ENCODE measurements at regions of chr17 and their contacts with region 1.

Region 1: GRCh38 chr17:77957857-77958715 is at the start of gene TNRC6C:
- DNase-seq: peak; percentile 99 to 100 (median 100)
- ATAC-seq: peak; percentile 86
- H3K4me3 ChIP-seq: peak within 1 kb of the TSS; percentile 74 to 81
- H3K4me3 Mint-ChIP-seq: peak within 1 kb of the TSS; percentile 97
- H3K27ac ChIP-seq: peak within 1 kb of the TSS; percentile 57 to 79
- H3K27ac Mint-ChIP-seq: peak within 1 kb of the TSS; percentile 97
- H3K4me1 ChIP-seq: peaks cover 37% of the 10 kb centered on the region
- H3K4me1 Mint-ChIP-seq: peaks cover 38% of the 10 kb centered on the region
- H3K27me3 ChIP-seq: no peaks in the 10 kb centered on the region
- H3K27me3 Mint-ChIP-seq: no peaks in the 10 kb centered on the region
- CTCF ChIP-seq: no peak
- total RNA-seq, gene TNRC6C: 49.3 to 53.8 TPM

Region 2: GRCh38 chr17:77312786-77313599 is 645.1 kb before region 1 on chr17:
- CTCF ChIA-PET with region 1: no interaction called
- POLR2A ChIA-PET with region 1: no interaction called
- intact Hi-C with region 1: no loop called
- DNase-seq: no peak
- ATAC-seq: no peak
- H3K4me3 ChIP-seq: no peak overlapping the region
- H3K4me3 Mint-ChIP-seq: no peak overlapping the region
- H3K27ac ChIP-seq: no peak overlapping the region
- H3K27ac Mint-ChIP-seq: no peak overlapping the region
- H3K4me1 ChIP-seq: no peaks in the 10 kb centered on the region
- H3K4me1 Mint-ChIP-seq: no peaks in the 10 kb centered on the region
- H3K27me3 ChIP-seq: no peaks in the 10 kb centered on the region
- H3K27me3 Mint-ChIP-seq: no peaks in the 10 kb centered on the region
- CTCF ChIP-seq: no peak

Region 3: DNA sequence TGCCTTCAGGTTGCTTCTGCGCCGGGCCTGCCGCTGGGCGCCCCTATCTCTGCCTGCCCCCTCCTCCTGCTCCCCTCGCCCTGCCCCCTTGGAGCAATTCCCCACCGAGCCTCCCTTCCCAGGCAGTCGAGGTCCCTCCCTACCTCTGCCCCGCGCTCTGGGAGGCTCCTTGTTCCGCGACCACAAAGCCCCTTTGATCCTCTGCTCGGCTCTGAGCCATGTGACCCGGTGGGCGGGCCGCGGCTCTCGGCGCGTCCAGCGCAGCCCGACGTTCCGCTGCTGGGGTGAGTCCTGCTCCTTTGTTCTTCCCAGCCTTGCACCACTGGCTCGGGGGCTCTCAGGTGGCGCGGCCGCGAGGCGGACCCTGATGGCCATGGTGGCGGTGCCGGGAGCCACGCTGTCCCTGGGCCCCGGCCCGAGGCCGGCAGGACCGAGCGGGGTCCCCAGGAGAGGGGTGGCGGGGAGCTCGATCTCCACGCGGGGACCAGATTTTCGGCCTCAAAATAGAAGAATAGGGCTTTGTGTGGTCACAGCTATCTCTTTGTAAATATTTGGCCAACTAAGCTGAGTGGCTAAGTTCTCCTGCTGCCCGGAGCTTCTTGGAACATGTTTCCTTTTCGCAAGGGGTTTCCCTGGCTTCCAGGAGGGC is 506.7 kb before region 1 on chr17:
- CTCF ChIA-PET with region 1: no interaction called
- POLR2A ChIA-PET with region 1: interaction called, 3 read pairs
- intact Hi-C with region 1: loop called in 1 of 2 experiments (anchors 5 kb)
- DNase-seq: peak; percentile 36 to 86 (median 73)
- ATAC-seq: peak; percentile 25
- H3K4me3 ChIP-seq: peak overlapping the region; percentile 93 to 99
- H3K4me3 Mint-ChIP-seq: peak overlapping the region; percentile 94
- H3K27ac ChIP-seq: peak overlapping the region; percentile 80 to 86
- H3K27ac Mint-ChIP-seq: peak overlapping the region; percentile 100
- H3K4me1 ChIP-seq: peaks cover 54% of the 10 kb centered on the region
- H3K4me1 Mint-ChIP-seq: peaks cover 50% of the 10 kb centered on the region
- H3K27me3 ChIP-seq: no peaks in the 10 kb centered on the region
- H3K27me3 Mint-ChIP-seq: no peaks in the 10 kb centered on the region
- CTCF ChIP-seq: no peak

Region 4: GRCh38 chr17:77772461-77772897 is 185.6 kb before region 1 on chr17:
- CTCF ChIA-PET with region 1: interaction called, 4 read pairs
- POLR2A ChIA-PET with region 1: interaction called, 15 read pairs
- intact Hi-C with region 1: loop called (anchors 2 kb)
- DNase-seq: peak; percentile 46 to 82 (median 67)
- ATAC-seq: peak; percentile 95
- H3K4me3 ChIP-seq: no peak overlapping the region
- H3K4me3 Mint-ChIP-seq: no peak overlapping the region
- H3K27ac ChIP-seq: no peak overlapping the region
- H3K27ac Mint-ChIP-seq: peak overlapping the region; percentile 73
- H3K4me1 ChIP-seq: peaks cover 7% of the 10 kb centered on the region
- H3K4me1 Mint-ChIP-seq: peaks cover 13% of the 10 kb centered on the region
- H3K27me3 ChIP-seq: no peaks in the 10 kb centered on the region
- H3K27me3 Mint-ChIP-seq: no peaks in the 10 kb centered on the region
- CTCF ChIP-seq: peak; percentile 74

Region 5: GRCh38 chr17:77881545-77881944 is 76.5 kb before region 1 on chr17:
- CTCF ChIA-PET with region 1: interaction called, 7 read pairs
- POLR2A ChIA-PET with region 1: interaction called, 138 read pairs
- intact Hi-C with region 1: loop called (anchors 1 to 2 kb)
- DNase-seq: peak; percentile 57 to 93 (median 76)
- ATAC-seq: peak; percentile 13
- H3K4me3 ChIP-seq: peak overlapping the region; percentile 44
- H3K4me3 Mint-ChIP-seq: peak overlapping the region; percentile 79
- H3K27ac ChIP-seq: peak overlapping the region; percentile 80 to 98
- H3K27ac Mint-ChIP-seq: peak overlapping the region; percentile 98
- H3K4me1 ChIP-seq: peaks cover 83% of the 10 kb centered on the region
- H3K4me1 Mint-ChIP-seq: peaks cover 92% of the 10 kb centered on the region
- H3K27me3 ChIP-seq: no peaks in the 10 kb centered on the region
- H3K27me3 Mint-ChIP-seq: no peaks in the 10 kb centered on the region
- CTCF ChIP-seq: no peak

Region 6: DNA sequence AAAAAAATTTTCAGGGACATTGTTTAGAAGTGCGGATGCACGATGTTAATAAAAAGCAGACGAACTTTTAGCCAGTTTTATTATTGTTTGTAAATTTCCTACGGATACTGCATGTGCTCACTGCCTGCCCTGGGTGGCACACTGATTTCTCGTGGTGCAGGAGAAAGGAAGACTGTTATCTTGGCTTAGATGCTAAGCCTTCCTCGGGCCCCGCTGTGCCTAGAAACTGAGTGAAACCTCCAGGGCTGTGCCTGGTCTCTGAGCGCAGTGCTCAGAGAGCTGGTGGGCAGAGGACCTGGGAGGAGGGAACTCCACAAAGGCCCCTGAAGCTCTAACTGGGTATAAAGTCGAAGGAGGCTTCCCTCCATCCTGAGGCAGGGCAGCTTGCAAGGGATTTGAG is 35.0 kb before region 1 on chr17:
- CTCF ChIA-PET with region 1: no interaction called
- POLR2A ChIA-PET with region 1: no interaction called
- intact Hi-C with region 1: no loop called
- DNase-seq: no peak
- ATAC-seq: no peak
- H3K4me3 ChIP-seq: no peak overlapping the region
- H3K4me3 Mint-ChIP-seq: no peak overlapping the region
- H3K27ac ChIP-seq: no peak overlapping the region
- H3K27ac Mint-ChIP-seq: no peak overlapping the region
- H3K4me1 ChIP-seq: no peaks in the 10 kb centered on the region
- H3K4me1 Mint-ChIP-seq: peaks cover 8% of the 10 kb centered on the region
- H3K27me3 ChIP-seq: no peaks in the 10 kb centered on the region
- H3K27me3 Mint-ChIP-seq: peaks cover 5% of the 10 kb centered on the region
- CTCF ChIP-seq: no peak

Region 7: DNA sequence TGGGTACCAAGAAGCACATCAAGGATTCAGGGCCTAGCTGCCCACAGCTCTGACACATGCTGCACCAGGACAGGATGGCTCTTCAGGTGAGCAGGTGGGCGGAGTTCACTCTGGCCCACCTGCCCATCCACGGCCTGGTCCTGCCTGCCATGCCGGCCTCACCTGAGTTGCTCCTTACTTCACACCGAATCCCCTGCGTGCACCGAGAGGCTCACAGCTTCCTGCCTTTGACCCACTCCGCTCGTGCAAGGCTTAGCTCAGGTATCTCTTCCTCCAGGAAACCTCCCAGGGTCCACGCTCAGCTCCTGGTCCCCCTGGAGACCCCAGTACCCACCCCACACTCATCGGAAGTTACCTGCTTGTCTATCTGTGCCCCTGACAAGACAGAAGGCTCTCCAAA is 21.2 kb before region 1 on chr17:
- CTCF ChIA-PET with region 1: interaction called, 5 read pairs
- POLR2A ChIA-PET with region 1: interaction called, 19 read pairs
- intact Hi-C with region 1: no loop called
- DNase-seq: no peak
- ATAC-seq: no peak
- H3K4me3 ChIP-seq: no peak overlapping the region
- H3K4me3 Mint-ChIP-seq: no peak overlapping the region
- H3K27ac ChIP-seq: no peak overlapping the region
- H3K27ac Mint-ChIP-seq: no peak overlapping the region
- H3K4me1 ChIP-seq: peaks cover 9% of the 10 kb centered on the region
- H3K4me1 Mint-ChIP-seq: peaks cover 27% of the 10 kb centered on the region
- H3K27me3 ChIP-seq: no peaks in the 10 kb centered on the region
- H3K27me3 Mint-ChIP-seq: peaks cover 2% of the 10 kb centered on the region
- CTCF ChIP-seq: no peak

Region 8: DNA sequence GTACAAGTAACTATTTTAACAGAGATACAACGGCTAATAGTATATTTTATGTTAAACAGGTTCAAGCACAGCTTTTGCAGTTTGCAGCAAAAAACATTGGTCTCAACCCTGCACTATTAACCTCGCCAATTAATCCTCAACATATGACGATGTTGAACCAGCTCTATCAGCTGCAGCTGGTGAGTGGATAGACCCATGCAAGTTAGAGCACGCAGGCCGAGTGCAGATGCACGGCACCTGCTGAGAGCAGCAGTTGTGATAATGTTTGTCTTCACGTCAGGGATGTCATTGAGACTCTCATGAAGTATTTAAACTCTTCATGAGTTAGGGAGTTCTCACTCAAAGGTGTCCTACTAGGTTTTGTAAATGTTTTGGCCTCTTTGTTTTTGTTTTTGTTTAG is 124.9 kb after region 1 on chr17:
- CTCF ChIA-PET with region 1: no interaction called
- POLR2A ChIA-PET with region 1: no interaction called
- intact Hi-C with region 1: no loop called
- DNase-seq: no peak
- ATAC-seq: no peak
- H3K4me3 ChIP-seq: no peak overlapping the region
- H3K4me3 Mint-ChIP-seq: no peak overlapping the region
- H3K27ac ChIP-seq: no peak overlapping the region
- H3K27ac Mint-ChIP-seq: peak overlapping the region; percentile 18
- H3K4me1 ChIP-seq: no peaks in the 10 kb centered on the region
- H3K4me1 Mint-ChIP-seq: peaks cover 3% of the 10 kb centered on the region
- H3K27me3 ChIP-seq: no peaks in the 10 kb centered on the region
- H3K27me3 Mint-ChIP-seq: no peaks in the 10 kb centered on the region
- CTCF ChIP-seq: no peak

Region 9: GRCh38 chr17:78128551-78129350 is 170.7 kb after region 1 on chr17 and contains the start of gene TMC6:
- CTCF ChIA-PET with region 1: no interaction called
- POLR2A ChIA-PET with region 1: interaction called, 18 read pairs
- intact Hi-C with region 1: loop called (anchors 1 to 2 kb)
- DNase-seq: peak; percentile 52 to 91 (median 82)
- ATAC-seq: peak; percentile 25
- H3K4me3 ChIP-seq: peak within 1 kb of the TSS; percentile 95 to 97
- H3K4me3 Mint-ChIP-seq: peak within 1 kb of the TSS; percentile 92
- H3K27ac ChIP-seq: peak within 1 kb of the TSS; percentile 74 to 80
- H3K27ac Mint-ChIP-seq: peak within 1 kb of the TSS; percentile 98
- H3K4me1 ChIP-seq: peaks cover 59% of the 10 kb centered on the region
- H3K4me1 Mint-ChIP-seq: peaks cover 53% of the 10 kb centered on the region
- H3K27me3 ChIP-seq: no peaks in the 10 kb centered on the region
- H3K27me3 Mint-ChIP-seq: no peaks in the 10 kb centered on the region
- CTCF ChIP-seq: no peak
- total RNA-seq, gene TMC6: 518 to 535 TPM

Region 10: DNA sequence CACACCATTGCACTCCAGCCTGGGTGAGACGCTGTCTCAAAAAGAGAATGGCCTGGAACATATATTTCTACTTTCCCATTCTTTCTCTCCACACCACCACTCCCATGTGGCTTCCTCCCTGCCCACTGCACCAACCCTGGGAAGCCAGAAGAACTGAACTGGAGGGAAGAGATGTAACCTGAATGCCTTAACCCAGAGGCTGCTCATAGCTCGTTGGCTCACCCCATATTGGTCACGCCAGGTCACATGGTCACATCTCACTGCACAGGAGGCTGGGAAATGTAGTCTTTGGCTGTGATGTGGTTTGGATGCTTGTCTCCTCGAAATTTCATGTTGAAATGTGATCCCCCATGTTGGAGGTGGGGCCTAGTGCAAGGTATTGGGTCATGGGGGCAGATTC is 625.0 kb after region 1 on chr17:
- CTCF ChIA-PET with region 1: no interaction called
- POLR2A ChIA-PET with region 1: no interaction called
- intact Hi-C with region 1: no loop called
- DNase-seq: peak in 1 of 9 experiments; percentile 27
- ATAC-seq: no peak
- H3K4me3 ChIP-seq: no peak overlapping the region
- H3K4me3 Mint-ChIP-seq: no peak overlapping the region
- H3K27ac ChIP-seq: no peak overlapping the region
- H3K27ac Mint-ChIP-seq: no peak overlapping the region
- H3K4me1 ChIP-seq: no peaks in the 10 kb centered on the region
- H3K4me1 Mint-ChIP-seq: no peaks in the 10 kb centered on the region
- H3K27me3 ChIP-seq: peaks cover 0 to 2% of the 10 kb centered on the region in 2 experiments
- H3K27me3 Mint-ChIP-seq: peaks cover 12% of the 10 kb centered on the region
- CTCF ChIP-seq: no peak

Measured in CD8-positive, alpha-beta T cell (primary cell).